GM12878 (cell line): ENCODE measurements at regions of chrX and their contacts with region 1.

Region 1: DNA sequence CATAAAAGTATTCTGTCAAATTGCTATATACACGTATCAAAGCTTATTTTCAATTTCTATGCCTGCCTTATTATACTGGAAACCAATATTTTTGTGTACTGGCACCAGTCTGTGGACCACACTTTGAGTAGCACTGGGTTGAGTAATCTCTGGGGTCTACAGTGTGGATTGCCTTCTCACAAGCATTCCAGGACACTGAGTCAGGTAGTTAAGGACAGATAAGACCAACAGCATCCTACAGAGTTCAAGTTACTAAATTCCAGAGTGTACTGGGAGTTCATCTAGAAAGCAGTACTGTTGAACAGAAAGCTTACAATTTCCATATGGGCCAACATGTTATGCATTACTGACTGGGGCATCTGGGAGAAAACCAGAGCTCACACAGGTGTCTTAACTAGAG is 61.8 kb downstream of the VMA21 start:
- DNase-seq: no peak
- ATAC-seq: no peak
- H3K4me3 ChIP-seq: no peak overlapping the region
- H3K27ac ChIP-seq: no peak overlapping the region
- H3K4me1 ChIP-seq: no peaks in the 10 kb centered on the region
- H3K27me3 ChIP-seq: no peaks in the 10 kb centered on the region
- CTCF ChIP-seq: no peak
- EP300 ChIP-seq: no peak
- POLR2A ChIP-seq: no peak
- RAD21 ChIP-seq: no peak

Region 2: DNA sequence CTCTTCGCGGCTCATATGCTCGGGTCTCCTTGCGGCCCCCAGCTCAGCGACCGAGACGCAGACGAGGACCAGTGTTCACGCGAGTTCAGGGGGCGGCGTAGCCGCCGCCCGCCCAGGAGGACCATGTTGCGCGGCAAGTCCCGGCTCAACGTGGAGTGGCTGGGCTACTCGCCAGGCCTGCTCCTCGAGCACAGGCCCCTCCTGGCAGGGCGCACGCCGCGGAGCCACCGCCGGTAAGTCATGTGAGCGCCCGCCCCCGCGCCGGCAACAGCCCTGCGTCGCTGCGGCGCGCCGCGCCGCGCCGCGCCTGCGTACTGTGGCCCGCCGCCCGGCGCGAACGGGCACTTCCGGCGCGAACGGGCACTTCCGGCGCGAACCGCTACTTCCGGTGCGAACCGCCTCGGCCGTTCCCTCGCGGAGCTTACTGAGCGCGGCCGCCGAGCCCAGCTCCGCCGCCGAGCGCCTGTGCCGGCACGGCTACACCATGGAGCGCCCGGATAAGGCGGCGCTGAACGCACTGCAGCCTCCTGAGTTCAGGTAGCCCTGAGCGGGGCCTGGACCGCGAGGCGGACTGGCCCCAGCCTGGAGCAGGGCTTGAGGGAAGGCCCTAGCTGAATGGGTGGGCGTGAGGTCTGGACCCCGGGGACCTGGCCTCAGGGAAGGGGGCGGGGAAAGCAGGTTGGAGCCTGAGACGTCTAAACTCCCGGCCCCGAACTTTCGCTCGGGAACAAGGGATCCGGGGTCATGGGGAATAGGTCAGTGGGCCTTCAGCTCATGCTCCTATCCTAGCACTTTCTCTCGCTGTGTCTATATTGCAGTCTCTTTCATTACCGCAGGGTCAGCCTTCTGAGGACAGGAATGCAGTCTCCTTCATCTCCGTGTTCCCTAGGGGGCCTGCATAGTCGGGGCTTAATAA is 61.7 kb before region 1 on chrX and contains the start of gene VMA21:
- CTCF ChIA-PET with region 1: no interaction called
- POLR2A ChIA-PET with region 1: no interaction called
- RAD21 ChIA-PET with region 1: no interaction called
- SMC1A ChIA-PET with region 1: no interaction called
- in situ Hi-C with region 1: loop called (anchors 10 kb)
- intact Hi-C with region 1: no loop called
- DNase-seq: peak; percentile 9
- ATAC-seq: peak; percentile 88
- H3K4me3 ChIP-seq: peak within 1 kb of the TSS; percentile 80
- H3K27ac ChIP-seq: peak within 1 kb of the TSS; percentile 80
- H3K4me1 ChIP-seq: no peaks in the 10 kb centered on the region
- H3K27me3 ChIP-seq: no peaks in the 10 kb centered on the region
- CTCF ChIP-seq: no peak
- EP300 ChIP-seq: no peak
- POLR2A ChIP-seq: peak; percentile 93
- RAD21 ChIP-seq: no peak
- polyA plus RNA-seq, gene VMA21: 12.9 to 20.5 TPM

Region 3: GRCh38 chrX:151419782-151420181 is 39.0 kb before region 1 on chrX:
- CTCF ChIA-PET with region 1: no interaction called
- POLR2A ChIA-PET with region 1: no interaction called
- RAD21 ChIA-PET with region 1: no interaction called
- SMC1A ChIA-PET with region 1: no interaction called
- in situ Hi-C with region 1: no loop called
- intact Hi-C with region 1: no loop called
- DNase-seq: no peak
- ATAC-seq: no peak
- H3K4me3 ChIP-seq: no peak overlapping the region
- H3K27ac ChIP-seq: no peak overlapping the region
- H3K4me1 ChIP-seq: no peaks in the 10 kb centered on the region
- H3K27me3 ChIP-seq: no peaks in the 10 kb centered on the region
- CTCF ChIP-seq: no peak
- EP300 ChIP-seq: no peak
- POLR2A ChIP-seq: no peak
- RAD21 ChIP-seq: no peak